Natural killer cell (primary cell): ENCODE measurements at regions of chr5 and their contacts with region 1.

Region 1: DNA sequence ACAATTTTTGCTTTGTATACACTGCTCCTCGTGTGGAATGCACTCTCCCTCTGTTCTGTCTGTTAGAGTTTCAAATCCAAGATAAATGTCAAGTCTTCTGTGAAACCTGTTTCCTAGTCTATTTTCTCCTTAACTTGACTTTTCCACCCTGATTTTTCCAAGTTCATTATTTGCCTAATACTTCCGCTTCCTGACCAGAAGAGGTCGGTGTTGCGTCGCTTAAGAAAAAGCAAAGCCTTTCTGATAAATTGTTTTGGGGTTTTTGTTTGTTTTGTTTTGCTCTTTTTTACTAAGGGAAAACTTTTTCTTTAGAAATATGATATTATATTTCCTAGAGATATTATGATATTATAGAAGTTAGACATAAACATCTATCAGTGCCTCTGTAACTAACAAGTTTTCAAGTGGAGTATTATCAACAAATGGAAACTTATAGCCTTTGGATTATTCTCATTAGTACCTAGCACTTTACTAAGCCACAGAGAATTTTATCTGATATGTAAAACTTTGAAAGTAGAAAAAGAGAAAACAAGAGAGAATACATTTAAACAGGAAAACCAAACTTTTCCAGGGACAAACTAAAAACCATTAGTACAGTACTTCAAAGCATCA is 55.8 kb downstream of the PHAX start:
- DNase-seq: peak in 1 of 2 donors; percentile 68
- ATAC-seq: peak in 1 of 3 donors; percentile 42
- H3K4me3 ChIP-seq: no peak overlapping the region
- H3K4me3 Mint-ChIP-seq: no peak overlapping the region
- H3K27ac ChIP-seq: no peak overlapping the region
- H3K27ac Mint-ChIP-seq: no peak overlapping the region
- H3K4me1 ChIP-seq: no peaks in the 10 kb centered on the region
- H3K4me1 Mint-ChIP-seq: no peaks in the 10 kb centered on the region
- H3K27me3 ChIP-seq: no peaks in the 10 kb centered on the region
- H3K27me3 Mint-ChIP-seq: no peaks in the 10 kb centered on the region
- CTCF ChIP-seq: peak; percentile 74

Region 2: GRCh38 chr5:126624534-126624933 is 32.0 kb before region 1 on chr5:
- intact Hi-C with region 1: no loop called
- DNase-seq: no peak
- ATAC-seq: no peak
- H3K4me3 ChIP-seq: no peak overlapping the region
- H3K4me3 Mint-ChIP-seq: no peak overlapping the region
- H3K27ac ChIP-seq: no peak overlapping the region
- H3K27ac Mint-ChIP-seq: no peak overlapping the region
- H3K4me1 ChIP-seq: no peaks in the 10 kb centered on the region
- H3K4me1 Mint-ChIP-seq: no peaks in the 10 kb centered on the region
- H3K27me3 ChIP-seq: no peaks in the 10 kb centered on the region
- H3K27me3 Mint-ChIP-seq: no peaks in the 10 kb centered on the region
- CTCF ChIP-seq: no peak

Region 3: DNA sequence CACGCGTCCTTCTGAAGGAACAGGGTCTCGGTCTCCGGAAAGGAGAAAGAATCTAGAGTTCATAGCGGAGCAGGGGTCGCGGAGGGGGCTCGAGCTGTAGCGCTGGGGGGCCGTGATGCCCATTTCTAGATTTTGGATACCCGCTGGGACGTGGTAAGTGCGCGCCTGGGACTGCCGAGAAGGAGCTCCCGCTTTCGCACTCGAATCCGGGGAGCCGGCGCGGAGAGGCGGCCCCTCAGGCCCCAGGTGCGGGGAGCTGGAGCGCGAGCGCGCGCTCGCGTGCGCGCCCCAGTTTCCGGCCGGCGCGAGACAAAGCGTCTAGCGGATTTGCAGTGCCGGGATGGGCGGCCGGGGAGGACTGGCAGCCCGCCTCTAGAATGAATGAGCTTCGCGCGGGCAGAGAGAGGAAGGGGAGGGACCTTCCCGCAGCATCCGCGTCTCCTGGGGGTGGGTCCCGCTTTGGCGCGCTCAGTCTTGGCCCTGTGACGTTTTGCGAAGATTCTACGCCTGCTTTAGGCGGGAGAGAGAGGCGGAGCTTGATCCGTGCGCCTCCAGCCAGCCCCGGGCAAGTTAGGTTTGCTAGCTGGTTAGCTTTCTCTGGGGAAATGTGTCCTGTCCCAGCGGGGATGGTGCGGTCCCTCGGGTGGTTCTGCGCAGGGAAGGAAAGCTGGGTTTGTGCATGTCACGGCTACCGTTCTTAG is 121.6 kb after region 1 on chr5:
- intact Hi-C with region 1: loop called (anchors 1 kb)
- DNase-seq: peak; percentile 79 to 96
- ATAC-seq: peak; percentile 72 to 85 (median 73)
- H3K4me3 ChIP-seq: peak overlapping the region; percentile 85
- H3K4me3 Mint-ChIP-seq: peak overlapping the region; percentile 97
- H3K27ac ChIP-seq: peak overlapping the region; percentile 86
- H3K27ac Mint-ChIP-seq: peak overlapping the region; percentile 93 to 99
- H3K4me1 ChIP-seq: peaks cover 19% of the 10 kb centered on the region
- H3K4me1 Mint-ChIP-seq: peaks cover 25 to 28% of the 10 kb centered on the region in 2 donors
- H3K27me3 ChIP-seq: no peaks in the 10 kb centered on the region
- H3K27me3 Mint-ChIP-seq: no peaks in the 10 kb centered on the region
- CTCF ChIP-seq: no peak

Region 4: DNA sequence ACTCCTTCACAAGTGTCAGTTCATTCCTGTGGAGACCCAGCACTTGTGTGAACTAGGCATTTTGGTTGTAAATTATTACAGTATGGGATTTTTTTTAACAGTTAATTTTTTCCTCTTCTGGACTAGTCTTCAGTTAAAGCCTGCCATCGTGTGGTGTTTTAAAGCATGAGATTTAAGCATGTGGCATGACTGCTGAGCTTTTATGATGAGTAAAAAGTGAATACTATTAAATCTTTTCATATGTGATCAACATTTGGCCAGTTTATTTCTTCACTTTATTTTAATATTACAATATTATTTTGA is 145.4 kb after region 1 on chr5:
- intact Hi-C with region 1: loop called (anchors 5 kb)
- DNase-seq: peak in 1 of 2 donors; percentile 60
- ATAC-seq: peak in 2 of 3 donors; percentile 54 to 60
- H3K4me3 ChIP-seq: no peak overlapping the region
- H3K4me3 Mint-ChIP-seq: no peak overlapping the region
- H3K27ac ChIP-seq: no peak overlapping the region
- H3K27ac Mint-ChIP-seq: no peak overlapping the region
- H3K4me1 ChIP-seq: no peaks in the 10 kb centered on the region
- H3K4me1 Mint-ChIP-seq: peaks cover 0 to 18% of the 10 kb centered on the region in 2 donors
- H3K27me3 ChIP-seq: no peaks in the 10 kb centered on the region
- H3K27me3 Mint-ChIP-seq: no peaks in the 10 kb centered on the region
- CTCF ChIP-seq: peak; percentile 38

Region 5: GRCh38 chr5:127313847-127314473 is 657.5 kb after region 1 on chr5:
- intact Hi-C with region 1: loop called (anchors 1 kb)
- DNase-seq: peak; percentile 43 to 76
- ATAC-seq: peak; percentile 73 to 85 (median 82)
- H3K4me3 ChIP-seq: no peak overlapping the region
- H3K4me3 Mint-ChIP-seq: no peak overlapping the region
- H3K27ac ChIP-seq: no peak overlapping the region
- H3K27ac Mint-ChIP-seq: no peak overlapping the region
- H3K4me1 ChIP-seq: no peaks in the 10 kb centered on the region
- H3K4me1 Mint-ChIP-seq: no peaks in the 10 kb centered on the region
- H3K27me3 ChIP-seq: no peaks in the 10 kb centered on the region
- H3K27me3 Mint-ChIP-seq: peaks cover 6 to 13% of the 10 kb centered on the region in 2 donors
- CTCF ChIP-seq: peak; percentile 82

Region 6: GRCh38 chr5:127492854-127493738 is 836.6 kb after region 1 on chr5:
- intact Hi-C with region 1: loop called (anchors 5 kb)
- DNase-seq: peak in 1 of 2 donors; percentile 57
- ATAC-seq: peak; percentile 39 to 67 (median 53)
- H3K4me3 ChIP-seq: no peak overlapping the region
- H3K4me3 Mint-ChIP-seq: no peak overlapping the region
- H3K27ac ChIP-seq: no peak overlapping the region
- H3K27ac Mint-ChIP-seq: no peak overlapping the region
- H3K4me1 ChIP-seq: no peaks in the 10 kb centered on the region
- H3K4me1 Mint-ChIP-seq: no peaks in the 10 kb centered on the region
- H3K27me3 ChIP-seq: peaks cover 3% of the 10 kb centered on the region
- H3K27me3 Mint-ChIP-seq: peaks cover 26 to 47% of the 10 kb centered on the region in 2 donors
- CTCF ChIP-seq: peak; percentile 94